AG04449 (cell line): ENCODE measurements at regions of chr12 and their contacts with region 1.

Region 1: GRCh38 chr12:30847259-30847658 is 79.3 kb upstream of the TSPAN11 start:
- DNase-seq: no peak
- H3K4me3 ChIP-seq: no peak overlapping the region
- CTCF ChIP-seq: peak; percentile 38

Region 2: GRCh38 chr12:29519585-29520182 is 1327.6 kb before region 1 on chr12:
- CTCF ChIA-PET with region 1: interaction called, 58 read pairs
- POLR2A ChIA-PET with region 1: no interaction called
- DNase-seq: no peak
- H3K4me3 ChIP-seq: no peak overlapping the region
- CTCF ChIP-seq: peak; percentile 9

Region 3: DNA sequence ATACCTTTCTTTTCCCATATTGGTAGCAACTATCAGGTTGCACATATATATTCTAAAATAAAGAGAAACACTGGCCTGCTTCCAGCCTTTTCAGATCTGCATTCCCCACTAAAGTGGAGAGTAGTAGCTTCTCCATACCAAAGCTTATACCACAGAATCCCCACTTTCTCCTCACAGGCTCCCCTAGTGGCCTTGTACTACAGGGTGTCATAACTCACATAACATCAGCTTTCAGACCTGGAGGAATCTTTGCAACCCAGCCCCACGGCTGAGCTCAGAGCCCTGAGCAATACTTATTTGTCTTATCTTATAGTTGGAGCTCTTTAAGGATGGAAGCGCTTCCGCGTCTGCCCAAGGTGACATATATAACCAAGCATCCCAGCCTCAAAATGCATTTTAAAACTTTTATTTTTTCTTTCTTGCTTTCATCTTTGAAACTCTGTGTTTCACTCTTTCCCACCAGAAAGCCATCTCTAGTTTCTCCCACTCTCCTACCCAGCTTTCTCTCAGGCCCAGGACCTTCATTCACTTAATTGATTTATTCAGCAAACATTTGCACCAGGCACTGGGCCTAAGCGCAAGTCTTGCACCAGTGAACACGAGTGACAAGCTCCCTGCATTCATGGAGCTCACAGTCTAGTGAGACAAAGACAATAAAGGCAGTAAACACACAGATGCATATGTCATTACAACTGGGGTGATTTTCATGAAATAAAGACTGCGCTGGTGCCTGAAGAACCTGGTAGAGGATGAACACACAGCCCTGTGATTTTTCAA is 406.2 kb before region 1 on chr12:
- CTCF ChIA-PET with region 1: no interaction called
- POLR2A ChIA-PET with region 1: no interaction called
- DNase-seq: no peak
- H3K4me3 ChIP-seq: no peak overlapping the region
- CTCF ChIP-seq: peak; percentile 52

Region 4: DNA sequence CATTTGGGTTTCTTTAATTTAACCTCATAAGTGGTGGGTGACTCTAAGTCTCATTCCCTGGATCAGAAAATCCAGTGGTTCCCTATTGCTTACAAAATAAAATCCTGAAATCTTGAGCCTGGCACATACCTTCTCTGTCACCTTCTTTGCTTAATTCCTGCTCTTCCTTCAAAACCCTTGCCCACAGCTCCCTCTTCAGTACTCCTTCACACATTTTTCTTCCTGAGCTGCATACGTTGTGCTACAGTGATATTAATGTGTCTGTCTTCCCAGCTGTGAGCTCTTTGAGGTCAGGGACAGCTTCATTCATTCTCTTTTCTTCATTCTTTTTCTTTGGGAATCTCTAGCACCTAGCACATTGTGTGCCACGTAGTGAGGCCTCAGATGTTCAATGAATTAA is 88.8 kb after region 1 on chr12:
- CTCF ChIA-PET with region 1: interaction called, 13 read pairs
- POLR2A ChIA-PET with region 1: no interaction called
- DNase-seq: no peak
- H3K4me3 ChIP-seq: no peak overlapping the region
- CTCF ChIP-seq: no peak

Region 5: DNA sequence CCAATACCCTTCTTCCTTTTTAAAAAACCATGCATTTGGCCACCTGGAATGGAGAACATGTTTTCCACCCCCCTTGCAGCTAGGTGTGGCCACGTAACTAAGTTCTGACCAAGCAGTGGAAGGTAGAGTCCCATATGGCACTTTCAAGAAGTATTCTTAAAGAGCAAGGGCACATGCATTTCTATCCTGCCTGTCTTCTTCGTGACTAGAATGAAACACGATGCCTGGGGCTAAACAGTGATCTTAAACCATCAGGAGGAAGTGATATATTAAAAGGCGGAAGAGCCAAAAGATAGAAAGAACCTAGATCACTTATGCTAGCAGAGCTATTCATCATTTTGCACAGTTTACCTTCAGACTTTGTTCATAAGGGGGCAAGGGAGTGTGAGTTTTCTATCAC is 210.4 kb after region 1 on chr12:
- CTCF ChIA-PET with region 1: interaction called, 16 read pairs
- POLR2A ChIA-PET with region 1: no interaction called
- DNase-seq: no peak
- H3K4me3 ChIP-seq: no peak overlapping the region
- CTCF ChIP-seq: no peak

Region 6: GRCh38 chr12:31274520-31275300 is 427.5 kb after region 1 on chr12:
- CTCF ChIA-PET with region 1: interaction called, 71 read pairs
- POLR2A ChIA-PET with region 1: no interaction called
- DNase-seq: no peak
- H3K4me3 ChIP-seq: no peak overlapping the region
- CTCF ChIP-seq: no peak